ENCODE measurements at regions of chr1 and their contacts with region 1.

Region 1: DNA sequence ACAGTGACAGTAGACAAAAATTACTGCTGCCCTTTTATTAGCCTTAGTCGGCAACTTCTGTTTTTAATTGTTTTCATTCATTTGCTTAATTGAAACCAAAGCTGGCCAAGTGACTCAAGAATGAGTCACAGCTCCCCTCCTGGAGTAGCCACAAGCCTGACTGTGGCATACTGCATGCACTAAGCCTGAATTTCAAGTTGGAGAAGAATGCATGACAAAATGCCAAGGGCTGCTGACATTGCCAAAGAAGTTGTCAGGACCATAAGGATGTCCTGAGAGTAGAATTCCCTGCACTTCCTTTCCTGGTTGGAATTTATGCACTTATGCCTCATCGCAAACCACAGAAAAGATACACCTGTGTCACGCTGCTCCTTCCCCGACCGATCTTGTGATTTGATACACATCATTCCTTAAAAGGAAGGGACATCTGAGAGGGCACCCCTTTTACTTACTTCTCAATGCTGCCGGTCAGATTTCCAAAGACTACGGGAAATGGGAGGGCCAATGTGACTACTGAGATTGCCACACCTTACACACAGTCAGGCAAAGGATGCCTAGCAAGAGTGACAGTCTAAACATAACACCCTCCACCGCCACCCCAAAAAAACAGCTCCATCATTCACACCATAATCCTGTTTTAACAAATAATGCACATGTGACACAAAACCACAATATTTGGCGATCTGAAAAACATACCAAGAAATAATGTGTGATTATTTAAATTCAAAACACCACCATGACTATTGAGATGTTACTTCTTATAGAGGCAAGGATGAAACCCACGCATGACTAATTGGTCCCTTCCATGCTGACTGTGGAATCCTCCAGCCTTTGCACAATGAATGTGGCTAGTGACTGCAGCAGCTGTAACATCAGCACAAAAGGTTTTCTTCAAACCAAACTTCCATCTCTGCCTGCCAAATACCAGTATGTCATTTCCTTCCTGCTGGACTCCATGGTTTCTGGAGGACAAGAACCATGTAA is 28.2 kb downstream of the VAV3 start:
- DNase-seq: peak; percentile 78
- H3K4me3 ChIP-seq: peak overlapping the region in 1 of 3 experiments; percentile 1
- H3K27ac ChIP-seq: peak overlapping the region; percentile 69
- H3K4me1 ChIP-seq: peaks cover 20% of the 10 kb centered on the region
- H3K27me3 ChIP-seq: no peaks in the 10 kb centered on the region
- CTCF ChIP-seq: no peak
- POLR2A ChIP-seq: no peak

Region 2: DNA sequence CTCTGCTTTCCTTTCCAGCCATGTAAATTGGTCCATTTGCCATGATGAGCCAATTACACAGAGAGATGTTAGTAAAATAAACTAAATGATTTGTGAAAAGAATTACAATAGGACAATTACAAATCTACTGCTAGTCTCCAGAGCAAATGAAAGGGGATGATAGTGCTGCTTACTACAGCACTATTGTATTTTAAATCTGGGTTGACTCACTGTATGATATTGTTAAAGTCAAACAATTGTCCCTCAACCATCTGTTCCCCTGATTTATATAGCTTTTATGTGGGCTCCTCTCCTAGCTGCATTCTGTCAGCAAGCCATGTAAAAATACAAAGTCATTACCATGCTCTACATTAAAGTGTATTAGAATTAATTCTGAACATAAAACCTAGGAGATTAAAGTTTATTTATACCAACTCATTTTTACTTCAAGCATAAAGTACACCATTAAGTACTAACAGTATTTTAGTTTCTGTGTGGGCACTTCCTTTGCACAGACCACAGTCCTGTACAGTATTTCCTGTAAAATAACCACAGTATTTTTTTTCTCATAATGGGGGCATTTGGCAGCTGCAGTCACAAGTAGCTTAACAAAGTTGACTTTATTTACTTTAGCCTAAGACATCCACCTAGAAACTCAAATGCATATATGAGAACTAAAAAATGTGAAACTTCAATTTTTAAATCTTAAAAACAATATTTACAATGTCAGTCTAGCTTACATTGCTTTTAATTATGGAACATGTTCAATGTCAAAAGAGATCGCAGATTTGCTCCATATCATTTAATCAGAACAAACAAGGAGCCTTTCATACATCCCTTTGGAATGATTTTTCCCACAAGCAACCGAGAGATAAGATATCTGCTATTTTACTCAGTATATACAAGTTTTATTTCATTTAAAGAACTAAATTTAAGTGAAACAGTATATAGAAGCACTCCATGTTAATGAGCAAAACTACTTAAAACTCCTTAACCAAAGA is 107.4 kb before region 1 on chr1:
- CTCF ChIA-PET with region 1: no interaction called
- POLR2A ChIA-PET with region 1: no interaction called
- dilution Hi-C with region 1: no loop called
- intact Hi-C with region 1: loop called (anchors 1 kb)
- DNase-seq: peak; percentile 55
- H3K4me3 ChIP-seq: peak overlapping the region in 1 of 3 experiments; percentile 21
- H3K27ac ChIP-seq: peak overlapping the region; percentile 21
- H3K4me1 ChIP-seq: peaks cover 11% of the 10 kb centered on the region
- H3K27me3 ChIP-seq: no peaks in the 10 kb centered on the region
- CTCF ChIP-seq: no peak
- POLR2A ChIP-seq: no peak

Region 3: DNA sequence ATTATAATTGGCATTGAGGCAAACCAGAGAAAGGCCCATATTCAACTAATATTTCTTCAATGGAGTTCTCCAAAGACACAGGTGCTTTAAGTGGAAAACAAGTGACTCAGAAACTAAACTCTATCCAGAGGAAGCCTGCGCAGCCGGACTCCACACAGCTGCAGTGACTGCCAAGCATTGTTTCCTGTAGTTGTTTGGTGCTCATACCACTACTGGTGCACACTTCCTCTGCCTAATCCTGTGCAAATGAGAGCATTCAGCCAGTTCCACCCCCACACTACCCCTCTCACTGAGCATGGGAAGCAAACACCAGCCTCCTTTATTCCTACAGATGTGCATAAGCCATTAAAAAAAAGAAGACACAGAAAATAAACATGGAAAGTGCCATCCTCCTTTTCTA is 74.7 kb before region 1 on chr1:
- CTCF ChIA-PET with region 1: no interaction called
- POLR2A ChIA-PET with region 1: no interaction called
- dilution Hi-C with region 1: no loop called
- intact Hi-C with region 1: loop called (anchors 1 kb)
- DNase-seq: peak; percentile 95
- H3K4me3 ChIP-seq: no peak overlapping the region
- H3K27ac ChIP-seq: no peak overlapping the region
- H3K4me1 ChIP-seq: peaks cover 15% of the 10 kb centered on the region
- H3K27me3 ChIP-seq: no peaks in the 10 kb centered on the region
- CTCF ChIP-seq: no peak
- POLR2A ChIP-seq: no peak

Region 4: GRCh38 chr1:107883562-107883961 is 53.2 kb before region 1 on chr1:
- CTCF ChIA-PET with region 1: no interaction called
- POLR2A ChIA-PET with region 1: no interaction called
- dilution Hi-C with region 1: no loop called
- intact Hi-C with region 1: no loop called
- DNase-seq: no peak
- H3K4me3 ChIP-seq: no peak overlapping the region
- H3K27ac ChIP-seq: no peak overlapping the region
- H3K4me1 ChIP-seq: no peaks in the 10 kb centered on the region
- H3K27me3 ChIP-seq: no peaks in the 10 kb centered on the region
- CTCF ChIP-seq: no peak
- POLR2A ChIP-seq: no peak

Region 5: GRCh38 chr1:107897438-107898345 is 39.1 kb before region 1 on chr1:
- CTCF ChIA-PET with region 1: no interaction called
- POLR2A ChIA-PET with region 1: no interaction called
- dilution Hi-C with region 1: no loop called
- intact Hi-C with region 1: loop called (anchors 2 kb)
- DNase-seq: peak; percentile 20
- H3K4me3 ChIP-seq: no peak overlapping the region
- H3K27ac ChIP-seq: no peak overlapping the region
- H3K4me1 ChIP-seq: no peaks in the 10 kb centered on the region
- H3K27me3 ChIP-seq: no peaks in the 10 kb centered on the region
- CTCF ChIP-seq: no peak
- POLR2A ChIP-seq: no peak

Region 6: GRCh38 chr1:107952989-107953388 is 16.2 kb after region 1 on chr1:
- CTCF ChIA-PET with region 1: no interaction called
- POLR2A ChIA-PET with region 1: no interaction called
- dilution Hi-C with region 1: no loop called
- intact Hi-C with region 1: loop called (anchors 1 kb)
- DNase-seq: peak; percentile 46
- H3K4me3 ChIP-seq: no peak overlapping the region
- H3K27ac ChIP-seq: no peak overlapping the region
- H3K4me1 ChIP-seq: peaks cover 13% of the 10 kb centered on the region
- H3K27me3 ChIP-seq: peaks cover 5 to 11% of the 10 kb centered on the region in 2 experiments
- CTCF ChIP-seq: no peak
- POLR2A ChIP-seq: no peak

Region 7: GRCh38 chr1:108009603-108010195 is 72.9 kb after region 1 on chr1:
- CTCF ChIA-PET with region 1: no interaction called
- POLR2A ChIA-PET with region 1: no interaction called
- dilution Hi-C with region 1: no loop called
- intact Hi-C with region 1: no loop called
- DNase-seq: no peak
- H3K4me3 ChIP-seq: no peak overlapping the region
- H3K27ac ChIP-seq: no peak overlapping the region
- H3K4me1 ChIP-seq: no peaks in the 10 kb centered on the region
- H3K27me3 ChIP-seq: no peaks in the 10 kb centered on the region
- CTCF ChIP-seq: no peak
- POLR2A ChIP-seq: no peak

Region 8: DNA sequence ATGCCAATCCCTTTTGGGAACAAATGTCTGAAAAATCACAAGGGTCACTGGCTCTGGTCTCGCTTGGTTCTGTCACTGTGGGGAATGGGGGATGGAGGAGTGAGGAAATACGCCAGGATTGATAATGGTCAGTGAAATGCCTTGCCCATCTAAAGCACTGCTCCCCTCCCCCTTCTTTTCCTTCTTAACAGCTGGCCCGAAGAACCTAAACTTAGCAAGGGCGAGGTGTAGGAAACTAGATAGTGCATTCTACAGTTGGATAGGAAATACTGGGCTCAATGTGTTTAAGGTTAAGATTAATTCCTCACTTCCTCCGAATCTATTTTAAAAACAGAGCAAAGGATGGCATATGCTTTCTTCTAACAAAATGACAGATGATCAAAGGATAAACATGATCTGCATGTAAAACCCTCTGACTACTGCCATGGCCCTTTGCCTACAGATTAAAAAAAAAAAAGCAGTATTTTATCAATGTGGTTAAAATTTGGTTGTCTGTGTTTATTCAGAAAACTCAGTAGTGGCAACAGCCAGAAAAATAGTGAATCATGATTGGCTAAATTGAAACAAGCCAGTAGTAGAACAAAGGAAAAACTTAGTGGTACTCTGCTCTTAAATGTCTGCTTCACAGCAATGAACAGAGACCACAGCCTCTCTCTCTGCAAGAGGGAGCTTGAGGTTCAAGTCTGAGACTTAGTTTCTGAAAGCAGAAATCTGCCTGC is 114.3 kb after region 1 on chr1:
- CTCF ChIA-PET with region 1: no interaction called
- POLR2A ChIA-PET with region 1: no interaction called
- dilution Hi-C with region 1: no loop called
- intact Hi-C with region 1: loop called (anchors 1 kb)
- DNase-seq: peak; percentile 80
- H3K4me3 ChIP-seq: no peak overlapping the region
- H3K27ac ChIP-seq: peak overlapping the region; percentile 13
- H3K4me1 ChIP-seq: peaks cover 18% of the 10 kb centered on the region
- H3K27me3 ChIP-seq: no peaks in the 10 kb centered on the region
- CTCF ChIP-seq: no peak
- POLR2A ChIP-seq: no peak

Measured in endothelial cell of umbilical vein (primary cell).